ENCODE measurements at regions of chr5 and their contacts with region 1.

Region 1: DNA sequence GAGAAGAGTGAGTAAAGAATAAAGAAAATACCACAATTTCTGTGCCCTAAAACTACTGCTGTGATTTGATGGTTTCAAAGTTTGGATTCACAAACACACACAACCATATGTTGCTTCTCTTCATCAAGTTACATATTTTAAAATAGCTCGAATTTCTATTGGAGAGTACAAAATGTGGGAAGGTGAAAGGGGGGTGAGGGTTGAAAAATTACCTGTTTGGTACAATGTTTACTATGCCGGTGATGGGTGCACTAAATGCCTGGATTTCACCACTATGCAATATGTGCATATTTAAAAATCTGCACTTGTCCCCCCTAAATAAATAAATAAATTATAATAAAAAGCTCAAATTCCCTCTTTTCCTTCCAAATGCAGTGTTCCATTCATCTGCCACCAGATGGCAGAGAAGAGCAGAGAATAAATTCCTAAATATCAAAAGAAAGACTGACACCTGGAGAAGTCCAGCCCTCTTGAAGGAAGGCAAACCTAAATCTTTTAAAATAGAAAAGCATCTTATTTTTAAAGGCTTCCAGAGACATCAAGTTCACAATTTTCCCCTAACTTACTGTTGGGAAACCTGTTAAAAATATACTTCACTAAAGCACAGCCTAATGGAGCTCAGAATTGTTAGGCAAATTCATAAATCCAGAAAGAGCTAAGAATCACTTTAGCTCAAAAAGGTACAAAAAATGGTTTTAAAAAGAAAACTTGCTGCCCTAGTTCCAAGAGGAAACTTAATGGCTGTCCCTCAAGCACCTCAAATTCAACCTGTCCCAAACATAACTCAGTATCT is 24.8 kb upstream of the HNRNPA0 start:
- DNase-seq: no peak
- ATAC-seq: no peak
- H3K4me3 ChIP-seq: no peak overlapping the region
- H3K27ac ChIP-seq: no peak overlapping the region
- H3K4me1 ChIP-seq: peaks cover 0 to 13% (median 0%) of the 10 kb centered on the region in 9 donors
- H3K27me3 ChIP-seq: no peaks in the 10 kb centered on the region
- CTCF ChIP-seq: peak; percentile 56 to 88 (median 81)

Region 2: DNA sequence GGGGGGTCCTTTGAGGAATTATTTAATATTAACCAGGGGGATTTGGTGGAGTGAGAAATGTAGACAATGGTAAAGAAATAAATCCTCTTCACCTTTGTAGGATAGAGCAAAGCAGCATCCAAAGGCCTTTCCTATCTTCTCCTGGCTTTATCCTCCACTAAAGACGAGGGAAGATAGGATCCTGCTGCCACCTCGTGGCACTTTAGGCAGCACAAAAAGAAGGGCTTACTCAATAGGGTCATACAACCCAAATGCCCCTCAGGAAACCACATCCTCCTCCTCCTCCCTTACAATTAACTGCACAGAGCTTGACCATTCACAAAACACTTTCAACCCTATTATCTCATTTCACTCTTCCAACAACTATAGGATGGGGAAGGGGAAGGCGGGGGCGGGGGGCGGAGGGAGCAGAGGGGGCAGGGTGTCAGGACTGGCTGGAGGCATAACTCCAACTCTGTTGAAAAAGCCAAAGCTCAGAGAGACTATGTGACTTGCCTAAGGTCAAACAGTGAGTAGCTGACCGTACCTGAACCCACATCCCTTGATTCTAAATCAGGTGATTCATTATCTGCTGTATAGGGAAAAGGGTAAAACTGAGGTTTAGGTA is 43.3 kb after region 1 on chr5:
- intact Hi-C with region 1: loop called in 1 of 10 experiments (anchors 5 kb)
- DNase-seq: peak in 1 of 2 donors; percentile 22
- ATAC-seq: peak in 6 of 8 donors; percentile 60 to 80 (median 76)
- H3K4me3 ChIP-seq: no peak overlapping the region
- H3K27ac ChIP-seq: peak overlapping the region in 3 of 10 donors; percentile 32 to 49 (median 32)
- H3K4me1 ChIP-seq: peaks cover 0 to 17% (median 4%) of the 10 kb centered on the region in 9 donors
- H3K27me3 ChIP-seq: no peaks in the 10 kb centered on the region
- CTCF ChIP-seq: peak in 6 of 9 donors; percentile 20 to 49 (median 44)

Region 3: DNA sequence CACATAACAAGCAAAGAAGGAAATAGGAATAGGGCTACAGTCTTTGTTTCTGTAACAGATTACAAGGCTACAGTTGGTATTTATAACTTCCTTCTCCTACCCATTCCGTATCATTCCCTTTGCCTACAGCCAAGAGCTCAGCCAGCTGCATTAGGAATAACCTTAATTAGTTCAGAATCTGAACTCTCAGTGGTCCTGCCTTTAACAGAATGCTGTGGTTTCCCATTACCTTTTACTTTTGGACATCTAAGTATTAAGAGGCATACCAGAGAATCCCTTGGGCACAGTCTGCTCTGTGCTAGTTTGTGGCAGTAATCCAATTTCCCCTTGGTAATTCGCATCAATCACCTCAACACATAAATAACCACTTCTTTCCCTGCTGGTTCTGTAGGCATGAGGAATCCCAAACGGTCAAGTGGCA is 154.5 kb after region 1 on chr5:
- intact Hi-C with region 1: loop called in 1 of 10 experiments (anchors 10 kb)
- DNase-seq: no peak
- ATAC-seq: peak in 7 of 8 donors; percentile 32 to 60 (median 50)
- H3K4me3 ChIP-seq: no peak overlapping the region
- H3K27ac ChIP-seq: peak overlapping the region in 7 of 10 donors; percentile 17 to 63 (median 41)
- H3K4me1 ChIP-seq: peaks cover 0 to 31% (median 17%) of the 10 kb centered on the region in 9 donors
- H3K27me3 ChIP-seq: no peaks in the 10 kb centered on the region
- CTCF ChIP-seq: no peak

Region 4: GRCh38 chr5:138128334-138128733 is 349.4 kb after region 1 on chr5:
- intact Hi-C with region 1: loop called in 5 of 10 experiments (anchors 5 to 10 kb)
- DNase-seq: no peak
- ATAC-seq: no peak
- H3K4me3 ChIP-seq: no peak overlapping the region
- H3K27ac ChIP-seq: no peak overlapping the region
- H3K4me1 ChIP-seq: peaks cover 0 to 7% (median 0%) of the 10 kb centered on the region in 9 donors
- H3K27me3 ChIP-seq: peaks cover 0 to 5% (median 0%) of the 10 kb centered on the region in 7 donors
- CTCF ChIP-seq: no peak

Measured in heart right ventricle (tissue), 16 donors.